ENCODE measurements at regions of chr18 and their contacts with region 1.

Region 1: DNA sequence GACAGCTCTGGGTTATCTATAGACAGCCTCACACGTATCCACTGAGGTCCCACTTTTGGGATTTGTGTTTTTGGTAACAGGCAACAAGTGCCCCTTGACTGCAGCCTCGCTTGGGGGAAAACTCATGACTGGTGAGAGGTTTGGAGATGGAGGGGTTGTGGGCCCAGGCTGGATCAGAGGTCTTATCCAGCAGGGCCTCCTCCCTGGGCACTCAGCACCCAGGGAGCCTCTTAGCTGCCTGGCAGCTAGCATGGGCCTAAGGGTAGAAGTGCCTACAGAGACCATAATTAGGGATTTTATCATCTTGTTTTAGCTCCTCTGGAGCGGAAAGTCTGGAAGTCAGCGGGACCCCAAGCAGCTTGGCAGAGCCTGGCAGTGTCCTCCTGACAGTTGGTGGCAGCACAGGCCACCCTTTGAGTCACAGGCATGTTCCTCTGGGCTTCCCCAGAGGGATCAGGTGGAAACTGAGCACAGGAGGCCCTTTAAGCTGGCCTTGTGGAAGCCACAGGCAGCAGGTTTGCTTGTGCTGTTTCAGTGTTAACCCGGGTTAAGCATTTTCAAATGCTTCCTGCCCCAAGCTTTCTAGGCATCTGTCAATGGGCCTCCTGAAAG is 143.1 kb downstream of the KCTD1 start:
- DNase-seq: peak; percentile 70
- CTCF ChIP-seq: peak; percentile 91

Region 2: GRCh38 chr18:26621161-26622026 is 216.1 kb after region 1 on chr18:
- in situ Hi-C with region 1: no loop called
- DNase-seq: peak; percentile 74
- CTCF ChIP-seq: peak; percentile 75

Region 3: DNA sequence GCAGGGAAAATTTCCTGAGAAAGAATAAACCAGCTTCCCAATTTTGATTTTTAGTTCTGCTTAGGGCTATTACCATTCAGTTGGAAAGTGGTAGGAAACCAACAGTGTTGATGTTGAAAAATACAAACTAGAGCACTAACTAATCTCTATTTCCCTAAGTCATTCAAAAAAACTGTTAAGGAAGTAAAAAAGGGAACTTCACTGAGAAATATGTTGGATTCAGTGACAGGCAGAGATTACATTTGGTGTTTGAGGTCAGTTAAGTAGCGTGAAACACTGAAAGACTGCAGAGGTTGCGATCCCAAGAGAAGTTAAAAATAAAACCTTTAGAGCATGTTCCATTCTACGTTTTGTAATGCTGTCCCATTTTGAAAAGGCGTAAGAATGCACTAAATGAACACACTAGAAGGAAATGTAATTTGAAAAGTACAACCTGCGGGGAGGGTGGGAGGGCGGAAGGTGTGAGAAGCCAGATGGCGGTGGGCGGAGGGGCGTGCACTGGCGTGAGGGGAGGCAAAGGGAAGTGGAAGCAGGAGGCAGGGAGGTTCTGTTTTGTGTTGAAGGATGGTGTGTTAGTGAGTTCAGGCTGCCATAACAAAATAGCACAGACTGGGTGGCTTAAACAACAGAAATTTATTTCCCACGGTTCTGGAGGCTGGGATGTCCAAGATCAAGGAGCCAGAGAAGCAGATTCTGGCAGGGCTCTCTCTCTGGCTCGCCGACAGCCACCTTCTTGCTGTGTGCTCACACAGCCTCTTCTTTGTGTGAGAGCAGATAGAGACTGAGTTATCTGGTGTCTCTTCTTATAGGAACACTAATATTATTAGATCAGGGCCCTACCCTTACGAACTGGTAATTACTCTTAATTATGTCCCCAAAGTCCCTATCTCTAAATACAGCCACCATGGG is 237.4 kb after region 1 on chr18:
- in situ Hi-C with region 1: loop called (anchors 10 kb)
- DNase-seq: no peak
- CTCF ChIP-seq: no peak

Measured in GM13977 (cell line).